GM18951 (cell line): ENCODE measurements at regions of chr22 and their contacts with region 1.

Region 1: DNA sequence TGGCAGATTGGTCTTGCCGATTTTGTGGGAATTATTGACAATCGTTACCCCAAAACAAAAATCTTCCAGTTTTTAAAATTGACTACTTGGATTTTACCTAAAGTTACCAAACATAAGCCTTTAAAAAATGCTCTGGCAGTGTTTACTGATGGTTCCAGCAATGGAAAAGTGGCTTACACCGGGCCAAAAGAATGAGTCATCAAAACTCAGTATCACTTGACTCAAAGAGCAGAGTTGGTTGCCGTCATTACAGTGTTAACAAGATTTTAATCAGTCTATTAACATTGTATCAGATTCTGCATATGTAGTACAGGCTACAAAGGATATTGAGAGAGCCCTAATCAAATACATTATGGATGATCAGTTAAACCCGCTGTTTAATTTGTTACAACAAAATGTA is 37.2 kb downstream of the IGLL1 start:
- POLR2A ChIP-seq: no peak

Region 2: DNA sequence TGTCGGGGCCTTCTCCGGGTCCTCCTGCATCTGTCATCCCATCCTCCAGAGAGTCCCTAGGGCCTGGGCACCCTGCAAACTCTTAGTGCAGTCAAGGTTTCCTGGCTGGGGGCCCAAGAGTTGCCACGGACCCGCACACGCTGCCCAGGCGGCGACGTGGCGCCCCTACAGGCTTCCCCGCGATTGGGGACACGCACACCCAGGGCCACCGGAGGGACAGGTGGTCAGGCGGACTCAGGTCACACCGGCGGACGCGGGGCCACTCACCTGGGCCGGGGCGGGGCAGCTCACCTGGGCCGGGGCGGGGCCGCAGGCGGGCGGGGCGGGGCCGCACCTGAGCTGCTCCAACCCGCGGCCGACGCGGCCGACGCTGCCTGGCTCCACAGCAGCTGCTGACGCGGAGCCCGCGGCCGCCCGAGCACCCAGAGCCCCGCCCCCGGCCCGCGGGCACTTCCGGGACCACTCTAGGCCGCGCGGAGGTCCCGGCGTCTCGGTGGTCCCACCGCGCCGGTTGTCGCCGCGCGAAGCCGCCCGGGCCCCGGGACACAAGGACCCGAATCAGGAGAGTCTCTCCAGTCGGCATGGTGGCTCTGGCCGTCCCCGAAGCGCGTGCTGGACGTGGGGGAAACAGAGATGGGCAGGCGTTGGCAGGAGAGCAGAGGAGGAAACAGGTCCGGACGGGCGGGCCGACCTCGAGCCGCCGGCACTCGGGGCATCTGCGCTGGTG is 207.9 kb after region 1 on chr22 and contains the start of gene ZNF70:
- in situ Hi-C with region 1: no loop called
- POLR2A ChIP-seq: peak; percentile 72

Region 3: DNA sequence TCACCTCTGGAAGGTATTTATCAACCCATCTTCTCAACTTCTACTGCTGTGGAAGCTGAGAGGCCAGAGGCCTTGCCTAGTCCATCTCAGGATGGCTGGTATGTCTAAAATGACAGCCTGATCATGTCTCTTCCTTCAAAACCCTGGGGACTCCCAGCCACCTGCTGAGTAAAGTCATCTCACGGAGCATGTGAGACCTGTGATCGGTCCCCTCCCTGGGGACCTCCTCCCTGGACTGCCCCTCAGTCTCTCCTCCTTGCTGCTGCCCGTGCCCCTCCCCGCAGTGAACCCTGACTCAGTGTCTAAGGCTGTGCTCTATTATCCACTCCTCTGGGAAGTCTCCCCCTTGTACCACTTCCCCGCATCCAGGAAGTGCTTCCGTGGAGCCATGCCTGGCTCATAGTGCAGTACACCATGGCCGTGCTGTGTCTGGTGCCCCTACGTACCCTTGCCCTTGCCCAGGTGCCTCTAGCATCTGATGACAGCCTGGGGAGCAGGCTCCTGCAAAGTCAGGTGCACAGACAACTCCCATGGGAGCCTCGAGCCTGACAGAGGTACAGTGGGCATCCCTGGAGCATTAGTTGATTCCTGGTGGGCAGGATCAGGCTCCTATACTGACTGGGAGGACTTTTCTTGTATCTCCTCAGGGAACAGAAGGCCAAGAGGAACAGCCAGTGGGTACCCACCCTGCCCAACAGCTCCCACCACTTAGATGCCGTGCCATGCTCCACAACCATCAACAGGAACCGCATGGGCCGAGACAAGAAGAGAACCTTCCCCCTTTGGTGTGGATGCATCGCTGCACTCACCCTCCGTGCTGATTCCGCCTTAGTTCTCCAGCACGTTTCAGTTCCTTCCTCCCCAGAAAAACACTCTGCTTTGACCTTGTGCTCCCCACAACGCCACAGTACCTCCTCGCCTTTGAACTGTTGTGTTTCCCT is 257.6 kb after region 1 on chr22:
- in situ Hi-C with region 1: no loop called
- POLR2A ChIP-seq: no peak

Region 4: DNA sequence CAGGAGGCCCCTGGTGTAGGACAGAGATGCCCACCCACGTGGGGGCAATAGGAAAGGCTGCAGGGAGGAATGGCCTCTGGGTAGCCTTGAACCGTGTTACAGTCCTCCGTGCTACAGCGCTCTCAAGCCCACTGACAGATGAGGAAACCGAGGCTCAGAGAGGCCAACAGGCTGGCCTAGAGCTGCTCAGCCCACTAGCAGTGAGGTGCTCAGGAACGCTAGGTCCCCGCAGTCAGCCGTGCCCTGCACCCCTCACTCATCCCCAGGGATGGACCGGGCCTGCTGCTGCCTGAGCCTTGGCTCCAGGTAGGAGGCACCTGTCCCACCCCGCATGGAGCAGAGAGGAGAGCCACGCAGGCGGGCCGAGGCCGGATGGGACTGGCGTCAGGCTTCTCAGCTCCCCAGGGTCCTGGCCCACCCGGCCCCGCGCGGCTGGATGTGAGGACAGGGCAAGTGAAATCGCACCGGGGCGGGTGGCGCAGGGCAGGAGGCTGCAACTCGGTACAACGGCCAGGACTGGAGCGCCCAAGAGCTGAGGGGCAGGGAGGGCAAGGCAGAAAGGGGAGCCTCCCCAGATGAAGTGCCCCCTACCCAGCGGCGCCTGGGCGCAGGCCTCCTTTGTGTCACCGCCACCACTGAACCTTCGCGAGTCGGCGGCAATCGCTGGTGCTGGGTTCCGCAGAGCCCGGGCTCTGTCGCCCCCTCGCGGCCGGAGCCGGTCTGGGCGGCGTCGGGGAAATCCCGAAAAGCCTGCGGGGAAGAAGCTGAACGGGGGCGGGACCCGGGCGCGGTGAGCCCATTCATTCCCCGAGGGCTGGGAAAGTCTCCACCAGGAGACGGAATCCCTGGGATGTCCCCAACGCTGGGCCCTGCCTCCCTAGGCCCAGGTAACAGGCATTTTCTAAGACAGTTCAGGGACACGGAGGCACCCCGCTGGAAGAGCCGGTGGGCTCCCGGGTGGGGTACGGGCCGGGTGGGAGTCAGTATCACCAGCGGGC is 306.4 kb after region 1 on chr22:
- in situ Hi-C with region 1: loop called (anchors 10 kb)
- POLR2A ChIP-seq: no peak